Endothelial cell of umbilical vein (primary cell): ENCODE measurements at regions of chr14 and their contacts with region 1.

Region 1: DNA sequence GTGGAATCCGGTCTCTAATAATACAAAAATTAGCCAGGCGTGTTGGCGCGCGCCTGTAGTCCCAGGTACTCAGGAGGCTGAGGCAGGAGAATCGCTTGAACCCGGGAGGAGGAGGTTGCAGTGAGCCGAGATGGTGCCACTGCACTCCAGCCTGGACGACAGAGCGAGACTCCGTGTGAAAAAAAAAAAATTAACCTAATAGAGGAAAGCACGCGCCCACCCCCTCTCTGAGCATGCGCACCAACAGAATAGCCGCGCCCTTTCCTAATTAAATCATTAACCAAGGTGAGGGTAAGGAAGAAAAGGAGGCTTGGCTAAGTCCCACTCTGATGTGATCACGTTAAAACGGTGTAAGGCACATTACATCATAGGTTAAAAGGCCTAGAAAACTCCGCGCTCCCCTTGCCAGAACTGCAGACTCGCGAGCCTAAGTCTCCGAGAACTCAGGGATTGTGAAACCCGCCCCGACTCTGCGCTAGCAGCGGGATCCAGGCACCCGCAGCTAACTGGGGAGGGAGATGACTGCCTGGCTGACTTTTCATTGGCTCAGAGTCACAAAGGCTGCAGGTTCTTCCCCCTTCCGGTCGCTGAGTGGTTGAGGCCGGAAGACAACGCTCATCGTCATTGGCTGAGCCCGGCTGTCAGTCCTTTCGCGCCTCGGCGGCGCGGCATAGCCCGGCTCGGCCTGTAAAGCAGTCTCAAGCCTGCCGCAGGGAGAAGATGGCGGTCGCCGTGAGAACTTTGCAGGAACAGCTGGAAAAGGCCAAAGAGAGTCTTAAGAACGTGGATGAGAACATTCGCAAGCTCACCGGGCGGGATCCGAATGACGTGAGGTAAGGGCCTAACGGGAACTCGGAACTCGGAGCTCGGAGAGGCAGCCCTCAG is at the start of gene PNN:
- DNase-seq: peak; percentile 100
- H3K4me3 ChIP-seq: peak within 1 kb of the TSS; percentile 69 to 92 (median 92)
- H3K27ac ChIP-seq: peak within 1 kb of the TSS; percentile 87
- H3K4me1 ChIP-seq: peaks cover 43% of the 10 kb centered on the region
- H3K27me3 ChIP-seq: no peaks in the 10 kb centered on the region
- CTCF ChIP-seq: no peak
- POLR2A ChIP-seq: peak; percentile 83
- total RNA-seq, gene PNN: 79.4 and 83.5 TPM in 2 replicates

Region 2: GRCh38 chr14:39219075-39219499 is 44.3 kb after region 1 on chr14:
- CTCF ChIA-PET with region 1: interaction called, 3 read pairs
- POLR2A ChIA-PET with region 1: interaction called, 3 read pairs
- dilution Hi-C with region 1: no loop called
- intact Hi-C with region 1: loop called (anchors 1 kb)
- DNase-seq: peak; percentile 89
- H3K4me3 ChIP-seq: no peak overlapping the region
- H3K27ac ChIP-seq: peak overlapping the region; percentile 61
- H3K4me1 ChIP-seq: peaks cover 23% of the 10 kb centered on the region
- H3K27me3 ChIP-seq: no peaks in the 10 kb centered on the region
- CTCF ChIP-seq: no peak
- POLR2A ChIP-seq: no peak